Prostate gland (tissue), 2 donors: ENCODE measurements at regions of chr20 and their contacts with region 1.

Region 1: DNA sequence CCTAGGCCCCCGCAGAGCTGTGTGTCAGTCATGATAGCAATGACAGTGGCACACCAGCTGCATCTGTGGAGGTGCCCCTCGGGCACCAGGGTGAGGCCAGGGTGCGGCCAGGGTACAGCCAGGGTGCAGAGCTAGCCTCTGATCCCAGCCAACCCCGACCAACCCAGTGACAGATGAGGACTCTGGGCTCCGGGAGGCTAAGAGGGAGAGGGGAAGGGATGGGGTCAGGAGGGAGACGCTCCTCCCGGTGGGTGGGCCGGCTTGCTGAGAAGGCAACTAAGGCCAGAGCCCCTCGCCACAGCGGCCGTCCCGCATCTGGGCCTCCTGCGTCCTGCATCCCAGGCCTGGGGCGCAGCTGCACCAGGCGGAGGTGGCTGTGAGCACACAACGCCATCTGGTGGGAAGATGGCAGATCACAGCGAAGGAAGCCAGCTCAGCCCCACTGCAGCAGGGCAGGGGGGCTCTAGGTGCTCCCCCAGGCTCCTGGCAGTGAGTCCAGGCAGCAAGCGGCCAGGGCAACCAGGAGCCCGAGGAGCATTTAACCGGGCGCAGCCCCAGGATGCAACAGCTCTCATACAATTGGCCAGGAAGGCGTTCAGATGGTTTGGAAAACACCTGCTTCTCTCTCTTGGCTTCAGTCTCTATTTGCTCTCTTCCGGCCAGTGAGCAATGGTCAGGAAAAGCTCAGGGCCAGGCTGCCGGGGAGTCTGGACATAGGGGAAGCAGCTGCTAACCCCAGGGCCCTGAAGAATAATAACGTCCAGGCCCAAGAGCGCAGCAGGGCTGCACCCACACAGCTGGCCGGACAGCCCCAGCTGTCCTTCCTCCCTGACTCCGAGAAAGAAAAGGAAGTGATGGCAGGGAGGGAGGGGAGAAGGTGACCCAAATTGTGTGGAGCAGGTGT is 169.4 kb downstream of the TAF4 start:
- DNase-seq: no peak
- H3K4me3 ChIP-seq: no peak overlapping the region
- H3K27ac ChIP-seq: no peak overlapping the region
- H3K4me1 ChIP-seq: no peaks in the 10 kb centered on the region
- H3K27me3 ChIP-seq: peaks cover 6% of the 10 kb centered on the region
- CTCF ChIP-seq: peak in 3 of 4 experiments; percentile 33 to 64 (median 50)
- POLR2A ChIP-seq: no peak

Region 2: GRCh38 chr20:60210779-60211617 is 1685.3 kb before region 1 on chr20:
- intact Hi-C with region 1: loop called (anchors 5 kb)
- DNase-seq: peak; percentile 43
- H3K4me3 ChIP-seq: no peak overlapping the region
- H3K27ac ChIP-seq: no peak overlapping the region
- H3K4me1 ChIP-seq: no peaks in the 10 kb centered on the region
- H3K27me3 ChIP-seq: no peaks in the 10 kb centered on the region
- CTCF ChIP-seq: peak; percentile 47 to 88 (median 70)
- POLR2A ChIP-seq: no peak